ENCODE measurements at regions of chr6 and their contacts with region 1.

Region 1: GRCh38 chr6:90222724-90223198 is 73.9 kb downstream of the BACH2 start:
- DNase-seq: no peak
- ATAC-seq: no peak
- H3K4me3 ChIP-seq: no peak overlapping the region
- H3K27ac ChIP-seq: no peak overlapping the region
- H3K4me1 ChIP-seq: peaks cover 0 to 33% (median 18%) of the 10 kb centered on the region in 12 donors
- H3K27me3 ChIP-seq: no peaks in the 10 kb centered on the region
- CTCF ChIP-seq: no peak
- POLR2A ChIP-seq: no peak

Region 2: DNA sequence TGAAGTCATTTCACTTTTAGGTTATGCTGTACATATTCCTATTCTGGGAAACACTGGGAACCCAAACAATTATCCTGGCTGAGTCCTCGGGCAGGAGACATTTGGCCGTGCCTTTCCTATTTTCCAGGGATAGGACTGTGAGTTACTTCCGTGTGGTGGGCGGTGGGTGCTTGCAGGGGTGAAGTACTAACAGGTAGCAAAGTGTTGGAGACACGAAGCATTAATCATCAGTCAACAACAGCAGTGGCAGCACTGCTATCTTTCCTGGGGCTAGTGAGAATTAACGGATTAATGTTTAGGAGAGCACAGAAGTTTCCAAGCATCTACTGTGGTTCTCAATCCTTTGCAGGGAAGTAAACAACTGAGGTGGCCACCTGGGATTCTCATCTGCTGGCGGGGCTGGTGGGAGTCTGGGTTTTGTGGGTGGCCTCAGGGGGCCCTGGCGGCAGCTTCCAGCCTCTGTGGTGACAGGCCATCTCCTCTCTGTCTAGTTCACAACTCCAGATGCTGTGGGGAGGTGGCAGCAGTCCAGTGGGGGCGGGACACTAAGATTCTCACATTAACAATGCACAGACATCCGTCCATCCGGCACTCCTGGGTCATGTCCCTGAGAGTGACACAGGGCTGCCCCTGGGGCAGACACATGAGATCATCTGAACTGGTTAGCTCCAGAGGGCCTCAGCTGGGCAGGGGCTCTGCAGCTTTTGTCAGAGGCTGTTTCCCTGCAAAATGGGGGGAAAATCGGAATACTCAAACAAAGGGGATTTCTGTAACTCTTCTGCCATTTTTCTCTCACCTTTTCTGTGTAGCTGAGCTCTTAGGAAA is 237.6 kb before region 1 on chr6:
- intact Hi-C with region 1: loop called in 2 of 10 experiments (anchors 5 kb)
- DNase-seq: peak; percentile 89 to 94 (median 91)
- ATAC-seq: peak; percentile 88 to 96 (median 89)
- H3K4me3 ChIP-seq: peak overlapping the region in 1 of 12 donors; percentile 4
- H3K27ac ChIP-seq: peak overlapping the region in 10 of 12 donors; percentile 22 to 76 (median 67)
- H3K4me1 ChIP-seq: peaks cover 0 to 29% (median 23%) of the 10 kb centered on the region in 12 donors
- H3K27me3 ChIP-seq: no peaks in the 10 kb centered on the region
- CTCF ChIP-seq: no peak
- POLR2A ChIP-seq: no peak

Region 3: GRCh38 chr6:90241229-90241880 is 18.6 kb after region 1 on chr6:
- intact Hi-C with region 1: no loop called
- DNase-seq: peak in 2 of 5 donors; percentile 29 to 39
- ATAC-seq: peak in 3 of 4 donors; percentile 31 to 67 (median 45)
- H3K4me3 ChIP-seq: no peak overlapping the region
- H3K27ac ChIP-seq: no peak overlapping the region
- H3K4me1 ChIP-seq: peaks cover 0 to 25% (median 5%) of the 10 kb centered on the region in 12 donors
- H3K27me3 ChIP-seq: no peaks in the 10 kb centered on the region
- CTCF ChIP-seq: no peak
- POLR2A ChIP-seq: no peak

Measured in heart left ventricle (tissue), 16 donors.